ENCODE measurements at regions of chr13 and their contacts with region 1.

Region 1: DNA sequence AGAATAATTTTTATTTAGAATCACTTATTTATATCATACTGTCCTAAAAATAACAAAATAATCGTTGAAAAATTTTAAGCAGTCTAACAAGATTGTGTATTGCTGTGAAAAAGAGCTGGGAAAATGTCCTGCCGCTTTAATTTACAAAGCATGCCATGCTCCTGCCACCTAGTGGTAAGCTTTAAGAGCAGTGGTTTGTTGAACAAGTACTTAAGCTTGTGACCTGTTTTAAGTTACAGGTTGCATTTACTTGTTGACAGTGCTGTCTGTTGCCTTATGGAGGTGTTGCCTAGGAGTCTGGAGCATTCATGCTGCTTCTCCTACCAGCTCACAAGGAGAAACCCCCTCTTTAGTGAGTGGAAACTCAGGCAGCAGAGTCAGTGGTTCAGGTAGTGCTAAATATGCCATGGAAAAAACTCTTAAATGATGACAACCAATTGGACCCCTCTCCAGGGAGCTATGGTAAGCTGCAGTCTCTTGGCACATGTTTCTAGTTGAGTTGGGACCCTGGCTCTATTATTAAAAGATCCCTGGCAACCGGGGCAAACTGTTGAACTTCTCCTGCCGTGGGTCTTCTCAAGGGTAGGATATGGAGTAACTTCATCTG is 68.4 kb downstream of the SPATA13 start:
- DNase-seq: peak in 19 of 35 experiments; percentile 9 to 78 (median 31)
- ATAC-seq: peak; percentile 38 to 66 (median 57)
- H3K4me3 ChIP-seq: no peak overlapping the region
- H3K4me3 Mint-ChIP-seq: no peak overlapping the region
- H3K27ac ChIP-seq: no peak overlapping the region
- H3K27ac Mint-ChIP-seq: no peak overlapping the region
- H3K4me1 ChIP-seq: peaks cover 6 to 46% of the 10 kb centered on the region in 2 experiments
- H3K4me1 Mint-ChIP-seq: peaks cover 16 to 47% (median 35%) of the 10 kb centered on the region in 3 donors
- H3K27me3 ChIP-seq: no peaks in the 10 kb centered on the region
- H3K27me3 Mint-ChIP-seq: no peaks in the 10 kb centered on the region

Region 2: GRCh38 chr13:24053519-24054251 is 175.3 kb before region 1 on chr13:
- CTCF ChIA-PET with region 1: interaction called, 5 to 11 read pairs
- POLR2A ChIA-PET with region 1: no interaction called
- DNase-seq: peak; percentile 16 to 77 (median 50)
- ATAC-seq: peak; percentile 85 to 98 (median 91)
- H3K4me3 ChIP-seq: no peak overlapping the region
- H3K4me3 Mint-ChIP-seq: no peak overlapping the region
- H3K27ac ChIP-seq: no peak overlapping the region
- H3K27ac Mint-ChIP-seq: no peak overlapping the region
- H3K4me1 ChIP-seq: no peaks in the 10 kb centered on the region
- H3K4me1 Mint-ChIP-seq: peaks cover 8 to 12% (median 9%) of the 10 kb centered on the region in 3 donors
- H3K27me3 ChIP-seq: peaks cover 0 to 13% of the 10 kb centered on the region in 2 experiments
- H3K27me3 Mint-ChIP-seq: peaks cover 0 to 9% of the 10 kb centered on the region in 2 donors

Region 3: GRCh38 chr13:24203811-24204210 is 25.1 kb before region 1 on chr13:
- CTCF ChIA-PET with region 1: interaction called, 4 to 12 read pairs
- POLR2A ChIA-PET with region 1: interaction called in 1 of 2 experiments, 3 read pairs
- DNase-seq: peak in 4 of 35 experiments; percentile 18 to 52 (median 24)
- ATAC-seq: peak; percentile 72 to 97 (median 94)
- H3K4me3 ChIP-seq: peak overlapping the region in 1 of 2 donors; percentile 5
- H3K4me3 Mint-ChIP-seq: peak overlapping the region in 2 of 3 donors; percentile 42 to 72
- H3K27ac ChIP-seq: no peak overlapping the region
- H3K27ac Mint-ChIP-seq: peak overlapping the region in 1 of 2 donors; percentile 71
- H3K4me1 ChIP-seq: peaks cover 0 to 27% of the 10 kb centered on the region in 2 experiments
- H3K4me1 Mint-ChIP-seq: peaks cover 20 to 29% (median 23%) of the 10 kb centered on the region in 3 donors
- H3K27me3 ChIP-seq: no peaks in the 10 kb centered on the region
- H3K27me3 Mint-ChIP-seq: peaks cover 0 to 3% of the 10 kb centered on the region in 2 donors

Region 4: GRCh38 chr13:24241336-24241735 is 12.4 kb after region 1 on chr13:
- CTCF ChIA-PET with region 1: interaction called, 5 to 11 read pairs
- POLR2A ChIA-PET with region 1: no interaction called
- DNase-seq: no peak
- ATAC-seq: no peak
- H3K4me3 ChIP-seq: no peak overlapping the region
- H3K4me3 Mint-ChIP-seq: no peak overlapping the region
- H3K27ac ChIP-seq: no peak overlapping the region
- H3K27ac Mint-ChIP-seq: no peak overlapping the region
- H3K4me1 ChIP-seq: no peaks in the 10 kb centered on the region
- H3K4me1 Mint-ChIP-seq: no peaks in the 10 kb centered on the region
- H3K27me3 ChIP-seq: no peaks in the 10 kb centered on the region
- H3K27me3 Mint-ChIP-seq: no peaks in the 10 kb centered on the region

Region 5: GRCh38 chr13:24270639-24271141 is 41.7 kb after region 1 on chr13:
- CTCF ChIA-PET with region 1: interaction called, 5 to 12 read pairs
- POLR2A ChIA-PET with region 1: interaction called, 3 to 9 read pairs
- DNase-seq: peak in 33 of 35 experiments; percentile 28 to 76 (median 45)
- ATAC-seq: peak; percentile 28 to 43 (median 42)
- H3K4me3 ChIP-seq: peak overlapping the region; percentile 53 to 75
- H3K4me3 Mint-ChIP-seq: peak overlapping the region; percentile 87 to 94 (median 91)
- H3K27ac ChIP-seq: peak overlapping the region; percentile 83
- H3K27ac Mint-ChIP-seq: peak overlapping the region; percentile 96 to 99
- H3K4me1 ChIP-seq: peaks cover 77 to 87% of the 10 kb centered on the region in 2 experiments
- H3K4me1 Mint-ChIP-seq: peaks cover 90 to 97% (median 94%) of the 10 kb centered on the region in 3 donors
- H3K27me3 ChIP-seq: no peaks in the 10 kb centered on the region
- H3K27me3 Mint-ChIP-seq: no peaks in the 10 kb centered on the region